ENCODE measurements at regions of chr12 and their contacts with region 1.

Region 1: DNA sequence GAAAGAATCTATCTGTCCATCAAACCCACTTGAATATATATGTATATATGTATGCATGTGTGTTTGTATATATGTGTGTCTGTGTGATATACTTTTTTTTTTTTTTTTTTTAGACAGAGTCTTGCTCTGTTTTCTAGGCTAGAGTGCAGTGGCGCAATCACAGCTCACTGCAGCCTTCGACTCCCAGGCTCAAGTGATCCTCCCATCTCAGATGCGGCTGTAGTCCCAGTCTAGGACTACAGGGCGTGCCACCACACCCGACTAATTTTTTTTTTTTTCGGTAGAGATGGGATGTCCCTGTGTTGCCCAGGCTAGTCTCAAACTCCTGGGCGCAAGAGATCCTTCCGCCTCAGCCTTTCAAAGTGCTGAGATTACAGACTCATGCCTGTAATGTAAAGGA is 13.0 kb upstream of the APOBEC1 start:
- DNase-seq: no peak
- H3K4me3 Mint-ChIP-seq: no peak overlapping the region
- H3K27ac Mint-ChIP-seq: no peak overlapping the region
- H3K4me1 Mint-ChIP-seq: peaks cover 6% of the 10 kb centered on the region
- H3K27me3 Mint-ChIP-seq: peaks cover 2% of the 10 kb centered on the region

Region 2: GRCh38 chr12:7282844-7283243 is 395.9 kb before region 1 on chr12:
- intact Hi-C with region 1: no loop called
- DNase-seq: no peak
- H3K4me3 Mint-ChIP-seq: no peak overlapping the region
- H3K27ac Mint-ChIP-seq: no peak overlapping the region
- H3K4me1 Mint-ChIP-seq: no peaks in the 10 kb centered on the region
- H3K27me3 Mint-ChIP-seq: peaks cover 11% of the 10 kb centered on the region

Region 3: DNA sequence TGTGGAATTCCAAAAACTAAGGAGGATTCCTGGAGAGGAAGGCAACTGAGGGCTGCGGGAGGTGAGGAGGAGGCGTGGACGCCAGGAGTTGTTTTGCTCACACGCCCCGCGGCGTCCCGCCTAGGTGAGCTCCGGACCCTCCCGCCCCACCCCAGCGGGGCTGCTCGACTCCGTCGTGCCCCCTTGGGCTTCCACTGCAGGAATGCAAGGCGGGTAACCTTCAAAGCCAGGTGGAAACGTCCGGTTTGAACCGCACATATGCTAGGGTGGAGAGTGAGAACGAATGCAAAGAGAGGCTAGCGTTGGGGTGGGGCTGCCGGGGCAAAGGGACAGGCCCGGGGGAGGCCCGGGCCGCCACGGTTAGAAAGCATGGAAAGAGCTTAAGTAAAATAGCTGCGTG is 27.1 kb after region 1 on chr12:
- intact Hi-C with region 1: no loop called
- DNase-seq: no peak
- H3K4me3 Mint-ChIP-seq: no peak overlapping the region
- H3K27ac Mint-ChIP-seq: no peak overlapping the region
- H3K4me1 Mint-ChIP-seq: no peaks in the 10 kb centered on the region
- H3K27me3 Mint-ChIP-seq: no peaks in the 10 kb centered on the region

Region 4: GRCh38 chr12:7806863-7807487 is 128.2 kb after region 1 on chr12:
- intact Hi-C with region 1: loop called (anchors 1 kb)
- DNase-seq: peak; percentile 87
- H3K4me3 Mint-ChIP-seq: no peak overlapping the region
- H3K27ac Mint-ChIP-seq: no peak overlapping the region
- H3K4me1 Mint-ChIP-seq: no peaks in the 10 kb centered on the region
- H3K27me3 Mint-ChIP-seq: peaks cover 3% of the 10 kb centered on the region

Region 5: GRCh38 chr12:7905071-7905470 is 226.3 kb after region 1 on chr12:
- intact Hi-C with region 1: no loop called
- DNase-seq: no peak
- H3K4me3 Mint-ChIP-seq: no peak overlapping the region
- H3K27ac Mint-ChIP-seq: no peak overlapping the region
- H3K4me1 Mint-ChIP-seq: no peaks in the 10 kb centered on the region
- H3K27me3 Mint-ChIP-seq: peaks cover 2% of the 10 kb centered on the region

Measured in activated CD4-positive, alpha-beta T cell treated with anti-CD3 and anti-CD28 coated beads, Interleukin-2, amount 10 ng/mL, durations not matched to agents 24 days and 14 days (primary cell).